Common myeloid progenitor, CD34-positive (primary cell): ENCODE measurements at regions of chr12 and their contacts with region 1.

Region 1: DNA sequence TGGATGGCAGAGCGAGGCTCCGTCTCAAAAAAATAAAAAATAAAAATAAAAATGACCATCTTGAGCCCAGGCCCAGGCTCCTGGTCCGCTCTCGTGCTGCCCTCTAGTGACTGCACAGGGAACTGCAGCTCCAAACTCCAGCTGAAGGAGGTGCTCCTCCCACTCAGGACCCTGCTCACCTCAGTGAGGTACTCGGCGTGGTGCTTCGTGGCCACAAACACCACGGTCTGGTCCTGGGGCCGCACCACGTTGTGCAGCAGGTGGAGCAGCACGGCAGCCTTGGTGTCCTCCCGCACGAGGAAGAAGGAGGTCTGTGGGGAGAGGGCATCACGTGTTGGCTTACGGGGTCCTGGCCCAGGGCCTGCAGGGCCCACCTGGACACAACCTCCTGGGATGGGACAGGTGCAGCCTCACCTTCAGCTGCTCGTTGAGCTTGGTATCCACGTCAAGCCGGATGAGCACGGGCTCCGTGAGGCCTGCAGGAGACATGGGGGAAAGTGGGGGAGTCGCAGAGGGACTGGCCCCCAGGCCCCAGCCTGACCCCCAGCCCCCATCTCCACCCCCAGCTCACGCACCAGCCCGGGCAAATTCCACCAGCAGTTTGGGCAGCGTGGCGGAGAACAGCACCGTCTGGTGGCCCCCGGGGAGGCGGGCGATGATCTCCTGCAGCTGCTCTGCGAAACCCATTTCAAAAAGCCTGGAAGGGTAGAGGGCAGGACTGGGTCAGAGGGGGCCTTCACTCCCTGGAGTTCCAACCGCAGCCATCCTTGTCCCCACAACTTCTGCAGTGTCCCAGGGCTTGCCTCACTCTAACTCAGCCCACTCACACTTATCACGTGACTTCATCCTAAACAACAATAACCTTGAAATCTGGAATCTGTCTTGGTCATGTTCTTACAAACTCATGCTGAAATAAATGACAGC is 10.6 kb downstream of the DDX54 start:
- DNase-seq: peak; percentile 56 to 79 (median 69)
- H3K4me3 ChIP-seq: no peak overlapping the region
- H3K27ac ChIP-seq: no peak overlapping the region
- H3K4me1 ChIP-seq: no peaks in the 10 kb centered on the region
- H3K27me3 ChIP-seq: no peaks in the 10 kb centered on the region

Region 2: GRCh38 chr12:113048716-113049127 is 126.0 kb before region 1 on chr12:
- CTCF ChIA-PET with region 1: interaction called, 35 read pairs
- POLR2A ChIA-PET with region 1: no interaction called
- DNase-seq: peak; percentile 64 to 81 (median 73)
- H3K4me3 ChIP-seq: no peak overlapping the region
- H3K27ac ChIP-seq: no peak overlapping the region
- H3K4me1 ChIP-seq: peaks cover 0 to 14% (median 5%) of the 10 kb centered on the region in 4 experiments
- H3K27me3 ChIP-seq: peaks cover 0 to 2% (median 0%) of the 10 kb centered on the region in 5 experiments

Region 3: DNA sequence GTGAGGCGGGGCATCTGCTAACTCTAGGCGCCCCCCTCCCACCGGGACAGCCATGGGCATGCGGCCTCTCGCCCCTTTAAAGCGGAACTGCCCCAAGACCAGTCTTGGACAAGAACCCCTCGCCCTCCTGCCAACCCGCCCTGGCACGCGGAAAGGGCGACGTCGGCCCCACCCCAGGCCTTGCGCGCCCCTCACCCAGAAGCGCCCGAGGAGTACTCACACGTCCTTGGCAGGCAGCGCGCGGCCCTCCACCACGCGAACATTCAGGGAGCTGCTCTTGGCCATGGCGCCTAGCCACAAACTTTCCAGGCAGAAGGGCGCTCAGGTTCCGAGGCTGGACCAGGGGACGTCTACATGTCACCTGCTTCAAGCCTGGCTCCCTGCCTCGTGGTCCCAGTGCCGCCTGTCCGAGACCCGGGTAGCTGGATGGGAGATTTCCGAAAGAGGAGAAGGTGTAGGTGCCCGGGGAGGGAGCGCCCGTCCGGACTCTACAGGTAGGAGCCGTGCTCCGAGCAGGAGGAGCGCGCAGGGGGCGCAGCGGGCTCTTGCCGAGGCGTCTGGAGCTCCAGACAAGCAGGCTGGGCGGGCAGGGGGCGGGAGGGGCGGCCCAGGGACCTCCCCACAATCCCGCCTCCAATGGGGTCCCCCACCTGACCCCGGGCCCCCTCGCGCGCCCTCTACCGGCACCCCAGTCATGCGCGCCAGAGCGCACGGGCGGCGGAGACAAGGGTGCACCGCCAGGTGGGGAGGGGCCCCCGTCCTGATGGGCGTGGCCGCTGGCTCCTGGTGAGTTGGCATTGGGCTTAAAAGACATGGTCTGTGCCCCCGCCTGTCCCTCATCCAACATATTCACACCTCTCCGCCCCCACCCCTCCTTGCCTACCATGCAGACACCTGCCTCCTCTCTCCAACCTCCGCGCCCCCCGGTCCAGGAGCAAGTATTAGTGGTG is 39.3 kb before region 1 on chr12 and contains the start of gene RASAL1:
- CTCF ChIA-PET with region 1: interaction called, 35 read pairs
- POLR2A ChIA-PET with region 1: no interaction called
- DNase-seq: peak; percentile 81 to 88 (median 85)
- H3K4me3 ChIP-seq: peak within 1 kb of the TSS; percentile 17 to 74 (median 53)
- H3K27ac ChIP-seq: no peak within 1 kb of the TSS
- H3K4me1 ChIP-seq: peaks cover 3 to 27% (median 19%) of the 10 kb centered on the region in 4 experiments
- H3K27me3 ChIP-seq: peaks cover 0 to 10% (median 2%) of the 10 kb centered on the region in 5 experiments

Region 4: GRCh38 chr12:113161414-113162016 is 13.2 kb before region 1 on chr12:
- CTCF ChIA-PET with region 1: interaction called, 97 read pairs
- POLR2A ChIA-PET with region 1: interaction called, 3 read pairs
- DNase-seq: peak in 1 of 3 donors; percentile 27
- H3K4me3 ChIP-seq: no peak overlapping the region
- H3K27ac ChIP-seq: no peak overlapping the region
- H3K4me1 ChIP-seq: peaks cover 0 to 1% (median 0%) of the 10 kb centered on the region in 4 experiments
- H3K27me3 ChIP-seq: no peaks in the 10 kb centered on the region